Activated naive CD4-positive, alpha-beta T cell treated with anti-CD3 and anti-CD28 coated beads for 36 hours (primary cell): ENCODE measurements at regions of chr21 and their contacts with region 1.

Region 1: GRCh38 chr21:42062236-42063022 is 8.7 kb upstream of the UMODL1 start:
- DNase-seq: peak; percentile 84
- H3K4me3 Mint-ChIP-seq: peak overlapping the region; percentile 14
- H3K27ac Mint-ChIP-seq: peak overlapping the region; percentile 30
- H3K4me1 Mint-ChIP-seq: peaks cover 49% of the 10 kb centered on the region
- H3K27me3 Mint-ChIP-seq: no peaks in the 10 kb centered on the region

Region 2: GRCh38 chr21:41879190-41879998 is 183.0 kb before region 1 on chr21 and contains the start of gene PRDM15:
- CTCF ChIA-PET with region 1: no interaction called
- intact Hi-C with region 1: loop called (anchors 2 kb)
- DNase-seq: peak; percentile 86
- H3K4me3 Mint-ChIP-seq: peak within 1 kb of the TSS; percentile 84
- H3K27ac Mint-ChIP-seq: peak within 1 kb of the TSS; percentile 91
- H3K4me1 Mint-ChIP-seq: peaks cover 15% of the 10 kb centered on the region
- H3K27me3 Mint-ChIP-seq: no peaks in the 10 kb centered on the region
- total RNA-seq, gene PRDM15: 9.6 to 9.8 TPM

Region 3: GRCh38 chr21:41926117-41926806 is 136.2 kb before region 1 on chr21:
- CTCF ChIA-PET with region 1: no interaction called
- intact Hi-C with region 1: loop called (anchors 1 kb)
- DNase-seq: peak; percentile 53
- H3K4me3 Mint-ChIP-seq: peak overlapping the region; percentile 85
- H3K27ac Mint-ChIP-seq: peak overlapping the region; percentile 97
- H3K4me1 Mint-ChIP-seq: peaks cover 71% of the 10 kb centered on the region
- H3K27me3 Mint-ChIP-seq: no peaks in the 10 kb centered on the region

Region 4: GRCh38 chr21:42009831-42010523 is 52.5 kb before region 1 on chr21 and contains the start of gene ZBTB21:
- CTCF ChIA-PET with region 1: no interaction called
- intact Hi-C with region 1: loop called (anchors 1 kb)
- DNase-seq: peak; percentile 98
- H3K4me3 Mint-ChIP-seq: peak within 1 kb of the TSS; percentile 98
- H3K27ac Mint-ChIP-seq: peak within 1 kb of the TSS; percentile 99
- H3K4me1 Mint-ChIP-seq: peaks cover 32% of the 10 kb centered on the region
- H3K27me3 Mint-ChIP-seq: no peaks in the 10 kb centered on the region
- total RNA-seq, gene ZBTB21: 27.8 to 28.0 TPM

Region 5: DNA sequence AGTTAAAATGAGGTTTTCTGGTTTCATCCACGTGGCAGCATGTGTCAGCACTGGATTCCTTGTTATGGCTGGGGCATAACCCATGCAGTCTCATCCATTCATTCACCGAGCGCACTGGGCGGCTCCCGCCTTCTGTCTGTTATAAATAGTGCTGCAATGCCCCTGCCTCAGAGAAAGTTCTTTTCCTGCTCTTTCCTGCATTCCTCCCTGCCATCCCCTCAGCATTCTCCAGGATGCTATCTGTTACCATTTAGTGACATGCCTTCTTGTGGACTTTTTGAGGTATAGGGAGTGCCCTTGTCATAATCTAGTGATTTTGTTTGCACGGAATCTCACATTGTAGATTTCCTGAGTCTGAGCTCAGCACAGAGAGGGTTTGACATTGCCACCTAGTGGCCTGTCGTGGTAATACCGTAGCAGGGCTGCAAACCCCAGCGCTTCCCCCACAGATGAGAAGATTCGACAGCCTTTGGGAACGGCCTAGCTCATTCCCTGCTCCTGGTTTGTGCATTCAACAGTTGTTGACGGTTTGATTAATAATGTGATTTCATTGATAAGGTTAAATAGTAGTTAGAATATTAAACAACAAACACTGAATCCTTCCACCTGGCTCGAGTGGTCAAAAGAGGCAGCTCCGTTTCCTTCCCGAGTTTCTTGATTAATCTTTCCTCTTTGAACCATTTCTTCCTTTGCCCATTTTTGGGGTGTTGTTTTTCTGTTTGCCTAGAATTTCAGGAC is 55.0 kb after region 1 on chr21:
- CTCF ChIA-PET with region 1: interaction called, 5 read pairs
- intact Hi-C with region 1: loop called (anchors 2 kb)
- DNase-seq: peak; percentile 88
- H3K4me3 Mint-ChIP-seq: no peak overlapping the region
- H3K27ac Mint-ChIP-seq: no peak overlapping the region
- H3K4me1 Mint-ChIP-seq: peaks cover 10% of the 10 kb centered on the region
- H3K27me3 Mint-ChIP-seq: peaks cover 31% of the 10 kb centered on the region

Region 6: DNA sequence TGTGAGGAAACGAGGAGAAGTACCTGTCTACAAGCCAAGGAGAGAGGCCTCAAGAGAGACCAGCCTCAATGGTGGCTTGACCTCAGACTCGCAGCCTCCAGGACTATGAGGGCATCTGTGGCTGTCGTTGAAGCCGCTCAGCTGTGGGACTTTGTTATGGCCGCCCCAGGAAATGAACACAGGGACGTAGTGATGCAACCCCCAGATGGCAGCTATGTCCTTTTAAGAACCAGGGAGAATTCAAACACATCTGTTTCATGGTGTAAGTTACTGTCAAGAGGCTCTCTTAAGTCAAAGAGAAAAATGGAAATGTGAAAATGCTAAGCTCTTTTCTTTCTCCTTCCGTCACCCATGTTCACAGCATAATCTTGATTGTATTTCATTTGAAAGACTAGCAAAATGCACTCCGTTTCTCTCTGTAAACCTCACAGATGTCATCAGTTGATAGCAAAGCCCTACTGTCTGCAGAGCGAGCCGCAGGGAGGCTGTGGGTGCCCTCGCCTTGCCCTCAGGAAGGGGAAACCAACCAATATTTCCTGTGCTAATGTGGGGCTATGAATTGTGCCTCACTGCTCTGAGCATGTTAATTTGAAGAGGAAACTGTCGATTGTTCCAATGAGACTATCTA is 362.6 kb after region 1 on chr21:
- CTCF ChIA-PET with region 1: no interaction called
- intact Hi-C with region 1: loop called (anchors 2 kb)
- DNase-seq: peak; percentile 75
- H3K4me3 Mint-ChIP-seq: peak overlapping the region; percentile 44
- H3K27ac Mint-ChIP-seq: peak overlapping the region; percentile 61
- H3K4me1 Mint-ChIP-seq: peaks cover 67% of the 10 kb centered on the region
- H3K27me3 Mint-ChIP-seq: no peaks in the 10 kb centered on the region

Region 7: GRCh38 chr21:42474982-42475381 is 412.6 kb after region 1 on chr21:
- CTCF ChIA-PET with region 1: no interaction called
- intact Hi-C with region 1: no loop called
- DNase-seq: no peak
- H3K4me3 Mint-ChIP-seq: no peak overlapping the region
- H3K27ac Mint-ChIP-seq: no peak overlapping the region
- H3K4me1 Mint-ChIP-seq: no peaks in the 10 kb centered on the region
- H3K27me3 Mint-ChIP-seq: no peaks in the 10 kb centered on the region